Common myeloid progenitor, CD34-positive (primary cell): ENCODE measurements at regions of chr6 and their contacts with region 1.

Region 1: DNA sequence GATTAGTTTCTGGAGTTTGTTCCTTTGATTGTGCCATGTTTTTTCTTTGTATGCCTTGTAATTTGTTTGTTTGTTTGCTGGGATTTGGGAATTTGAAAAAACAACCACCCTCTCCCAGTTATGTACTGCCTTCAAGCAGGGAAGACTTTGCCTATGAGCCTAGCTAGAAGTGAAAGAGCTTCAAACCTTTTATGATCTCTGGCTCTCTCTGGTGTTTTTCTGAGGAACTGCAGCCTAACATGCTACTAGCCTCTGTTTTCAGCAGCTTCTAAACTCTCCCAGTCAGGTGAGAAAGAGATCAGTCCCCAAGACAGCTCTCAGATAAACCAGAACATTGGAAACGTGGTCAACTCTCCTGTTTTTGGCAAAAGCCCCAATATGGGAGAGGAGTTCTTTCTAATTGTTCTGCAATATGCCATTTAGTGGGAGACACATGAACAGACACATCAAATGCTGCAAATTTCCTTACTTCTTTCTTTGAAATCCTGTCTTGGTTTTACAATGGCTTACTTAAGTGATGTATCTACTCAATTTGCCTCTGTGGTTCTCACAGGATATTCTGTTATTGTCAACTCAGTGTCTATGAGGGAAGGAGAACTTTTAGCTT is 58.9 kb upstream of the SERINC1 start:
- DNase-seq: peak; percentile 64 to 80 (median 66)
- H3K4me3 ChIP-seq: no peak overlapping the region
- H3K27ac ChIP-seq: no peak overlapping the region
- H3K4me1 ChIP-seq: no peaks in the 10 kb centered on the region
- H3K27me3 ChIP-seq: peaks cover 0 to 8% (median 2%) of the 10 kb centered on the region in 5 experiments

Region 2: GRCh38 chr6:122381497-122382265 is 148.9 kb before region 1 on chr6:
- CTCF ChIA-PET with region 1: interaction called, 29 read pairs
- POLR2A ChIA-PET with region 1: no interaction called
- DNase-seq: peak; percentile 72 to 88 (median 87)
- H3K4me3 ChIP-seq: no peak overlapping the region
- H3K27ac ChIP-seq: no peak overlapping the region
- H3K4me1 ChIP-seq: no peaks in the 10 kb centered on the region
- H3K27me3 ChIP-seq: peaks cover 0 to 3% (median 0%) of the 10 kb centered on the region in 5 experiments

Region 3: GRCh38 chr6:122471107-122472021 is 59.2 kb before region 1 on chr6 and contains the start of gene SERINC1:
- CTCF ChIA-PET with region 1: interaction called, 40 read pairs
- POLR2A ChIA-PET with region 1: no interaction called
- DNase-seq: peak; percentile 95 to 97 (median 97)
- H3K4me3 ChIP-seq: peak within 1 kb of the TSS; percentile 84 to 99 (median 91)
- H3K27ac ChIP-seq: peak within 1 kb of the TSS; percentile 94 to 98
- H3K4me1 ChIP-seq: peaks cover 3 to 21% (median 15%) of the 10 kb centered on the region in 4 experiments
- H3K27me3 ChIP-seq: no peaks in the 10 kb centered on the region

Region 4: DNA sequence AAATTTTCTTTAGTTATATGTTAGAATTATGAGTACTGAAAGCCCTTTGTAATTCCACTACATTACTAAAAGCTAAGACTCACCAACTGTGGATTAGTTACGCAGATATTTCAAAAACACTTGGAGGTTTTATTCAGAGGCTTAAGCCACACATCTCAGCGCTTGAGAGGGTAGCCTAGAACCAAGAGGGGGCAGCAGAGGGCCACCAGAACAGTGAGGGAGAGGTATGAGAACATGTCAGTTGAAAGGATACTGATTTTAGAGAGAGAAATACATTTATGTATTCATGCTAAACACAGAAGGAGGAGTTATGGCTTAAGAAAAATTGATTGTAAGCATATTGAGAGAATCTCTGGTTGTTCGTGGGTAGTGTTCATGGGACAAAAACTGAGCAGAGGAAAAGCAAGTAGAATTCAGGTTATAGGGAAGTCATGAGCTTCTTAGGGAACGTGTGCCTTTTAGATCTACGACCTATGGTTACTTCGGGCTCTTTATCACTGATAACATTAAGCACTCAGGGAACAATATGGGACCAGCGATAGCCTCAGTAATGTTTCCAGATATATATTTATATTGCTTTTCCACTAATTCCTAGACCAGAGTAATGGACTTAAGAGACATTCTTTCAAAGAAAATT is 38.5 kb before region 1 on chr6:
- CTCF ChIA-PET with region 1: interaction called, 153 read pairs
- POLR2A ChIA-PET with region 1: interaction called, 3 read pairs
- DNase-seq: peak; percentile 71 to 86 (median 85)
- H3K4me3 ChIP-seq: peak overlapping the region in 1 of 7 experiments; percentile 20
- H3K27ac ChIP-seq: no peak overlapping the region
- H3K4me1 ChIP-seq: peaks cover 5 to 16% (median 10%) of the 10 kb centered on the region in 4 experiments
- H3K27me3 ChIP-seq: peaks cover 0 to 12% (median 0%) of the 10 kb centered on the region in 5 experiments